ENCODE measurements at regions of chr1 and their contacts with region 1.

Region 1: GRCh38 chr1:71049951-71050598 is 2.5 kb upstream of the PTGER3 start:
- DNase-seq: peak in 2 of 4 donors; percentile 39 to 49
- ATAC-seq: peak; percentile 64
- H3K4me3 ChIP-seq: no peak overlapping the region
- H3K27ac ChIP-seq: no peak overlapping the region
- H3K4me1 ChIP-seq: peaks cover 19% of the 10 kb centered on the region
- H3K27me3 ChIP-seq: no peaks in the 10 kb centered on the region
- CTCF ChIP-seq: peak; percentile 47 to 94 (median 86)
- POLR2A ChIP-seq: no peak

Region 2: DNA sequence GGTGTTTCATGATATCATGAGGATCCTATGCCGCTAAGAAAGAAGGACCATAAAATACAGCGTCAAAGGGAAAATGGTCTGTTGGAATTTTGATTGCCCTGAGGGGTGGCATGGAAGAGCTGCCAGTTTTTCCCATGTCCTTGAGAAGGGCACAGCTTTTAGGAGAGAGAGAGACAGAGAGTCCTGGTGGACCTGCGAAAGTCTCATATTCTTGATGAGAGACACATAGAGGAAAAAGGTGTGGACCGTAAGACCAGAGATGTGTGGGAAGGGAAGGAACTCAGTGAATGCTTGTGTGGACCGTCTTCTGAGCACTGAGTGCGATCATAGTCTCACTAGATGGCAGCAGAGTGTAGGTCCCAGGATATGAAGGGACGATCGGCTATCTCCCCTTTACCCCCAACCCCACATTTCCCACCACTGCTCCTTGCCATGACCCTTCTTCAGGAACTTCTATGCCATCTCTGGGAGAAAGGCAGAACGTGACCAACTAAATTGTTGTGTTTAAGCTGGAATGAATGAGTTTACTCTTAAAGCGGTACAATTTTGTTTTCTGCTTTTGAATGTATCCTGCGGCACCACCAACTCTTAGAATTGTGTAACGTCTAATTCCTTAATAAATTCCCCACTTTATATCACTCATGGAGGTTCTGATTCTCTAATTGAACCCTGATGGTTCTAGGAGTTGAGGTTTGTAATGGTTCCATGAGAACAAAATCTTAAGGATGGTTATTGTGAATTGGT is 521.3 kb before region 1 on chr1:
- intact Hi-C with region 1: loop called (anchors 10 kb)
- DNase-seq: peak; percentile 24 to 50 (median 44)
- ATAC-seq: peak; percentile 76
- H3K4me3 ChIP-seq: no peak overlapping the region
- H3K27ac ChIP-seq: no peak overlapping the region
- H3K4me1 ChIP-seq: no peaks in the 10 kb centered on the region
- H3K27me3 ChIP-seq: no peaks in the 10 kb centered on the region
- CTCF ChIP-seq: peak; percentile 37 to 74 (median 63)
- POLR2A ChIP-seq: no peak

Region 3: DNA sequence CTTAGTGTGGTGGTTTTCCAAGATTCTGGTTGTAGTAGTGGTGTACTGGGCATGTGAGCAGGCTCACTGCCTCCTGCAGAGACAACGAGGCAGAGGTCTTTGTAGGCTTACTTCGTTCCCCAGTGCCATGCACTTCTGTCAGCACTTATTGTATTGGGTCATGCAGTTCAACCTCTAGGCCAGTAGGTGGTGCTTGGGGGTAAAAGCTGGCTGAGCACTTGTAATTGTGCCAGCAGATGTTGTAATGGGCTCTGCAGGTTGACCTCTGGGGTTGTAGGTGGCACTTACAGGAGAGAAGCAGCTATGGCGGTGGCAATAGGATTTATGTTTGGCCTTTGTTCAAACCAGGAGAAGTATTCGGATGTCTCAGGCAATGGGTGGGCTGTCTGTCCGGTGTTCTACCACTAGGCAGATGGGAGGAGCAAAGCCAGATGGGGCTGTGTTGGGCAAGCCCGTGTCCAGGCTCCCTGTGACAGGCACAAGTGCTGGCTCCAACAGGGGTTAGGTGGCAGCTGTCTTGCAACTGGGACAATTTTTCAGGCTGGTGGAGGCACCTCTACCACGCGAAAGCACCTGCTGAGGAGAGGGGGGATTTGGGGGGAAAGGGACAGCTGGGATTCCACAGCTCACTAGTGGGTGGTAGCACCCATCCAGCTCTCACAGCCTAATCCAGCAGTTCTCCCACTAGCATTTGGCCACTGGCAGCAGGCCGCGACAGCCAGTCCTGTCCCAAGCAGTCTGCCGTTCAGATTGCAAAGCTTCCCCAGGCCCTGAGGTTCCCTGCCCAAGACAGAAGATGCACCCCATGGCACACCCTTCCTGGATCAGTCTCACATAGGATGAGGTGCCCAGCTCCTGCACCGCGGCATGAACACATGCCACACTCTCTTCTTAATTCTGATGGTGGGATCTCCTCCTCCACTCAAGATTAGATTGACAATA is 364.5 kb before region 1 on chr1:
- intact Hi-C with region 1: loop called (anchors 5 kb)
- DNase-seq: peak; percentile 75 to 85 (median 82)
- ATAC-seq: peak; percentile 98
- H3K4me3 ChIP-seq: no peak overlapping the region
- H3K27ac ChIP-seq: no peak overlapping the region
- H3K4me1 ChIP-seq: no peaks in the 10 kb centered on the region
- H3K27me3 ChIP-seq: no peaks in the 10 kb centered on the region
- CTCF ChIP-seq: peak; percentile 71 to 94 (median 94)
- POLR2A ChIP-seq: no peak

Region 4: GRCh38 chr1:70866542-70867264 is 183.4 kb before region 1 on chr1:
- intact Hi-C with region 1: loop called (anchors 10 kb)
- DNase-seq: peak in 2 of 4 donors; percentile 40 to 47
- ATAC-seq: peak; percentile 35
- H3K4me3 ChIP-seq: no peak overlapping the region
- H3K27ac ChIP-seq: no peak overlapping the region
- H3K4me1 ChIP-seq: no peaks in the 10 kb centered on the region
- H3K27me3 ChIP-seq: no peaks in the 10 kb centered on the region
- CTCF ChIP-seq: peak in 4 of 7 experiments; percentile 13 to 53 (median 33)
- POLR2A ChIP-seq: no peak

Measured in body of pancreas (tissue), 4 donors.